Activated naive CD8-positive, alpha-beta T cell treated with anti-CD3 and anti-CD28 coated beads, Interleukin-2, amount 10 ng/mL, durations not matched to agents 7 days and 5 days (primary cell): ENCODE measurements at regions of chr9 and their contacts with region 1.

Region 1: DNA sequence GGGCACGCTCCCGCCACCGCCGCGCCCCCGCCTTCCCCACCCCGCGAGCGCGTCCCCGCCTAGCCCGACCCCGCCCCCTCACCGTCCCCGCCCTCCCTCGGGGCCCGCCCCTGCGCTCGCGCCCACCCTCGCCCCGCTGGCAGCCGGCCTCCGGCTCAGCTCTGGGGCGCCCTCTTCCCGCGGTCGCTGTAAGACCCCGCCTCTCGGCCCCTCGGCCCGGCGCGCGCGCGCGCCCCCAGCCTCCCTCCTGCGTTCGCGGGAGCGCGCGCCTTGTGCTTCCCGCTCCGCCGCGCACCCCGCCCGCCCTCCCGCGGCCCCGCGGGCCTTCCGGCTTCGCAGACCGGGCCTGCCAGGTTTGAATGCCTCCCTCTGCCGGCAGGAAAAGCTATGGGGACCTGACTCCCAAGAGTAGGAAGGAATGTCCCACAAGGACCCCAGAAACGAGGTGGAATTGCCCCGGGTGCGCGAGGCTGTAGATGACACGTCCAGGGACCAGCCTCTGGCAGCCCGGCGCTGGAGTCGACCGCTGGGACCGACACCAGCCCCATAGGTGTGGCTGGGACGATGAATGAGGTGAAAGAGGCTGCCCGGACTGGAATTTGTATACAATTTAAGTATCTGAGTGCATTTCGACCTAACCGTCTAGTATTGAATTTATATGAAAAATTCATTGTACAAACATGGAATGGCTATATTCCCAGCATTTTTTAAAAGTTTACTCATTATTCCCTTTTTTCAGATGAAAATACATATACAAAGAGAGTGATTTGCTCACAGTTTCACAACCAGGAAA is 416 bp upstream of the PTBP3 start:
- DNase-seq: peak; percentile 93
- ATAC-seq: peak; percentile 84
- H3K4me3 Mint-ChIP-seq: peak overlapping the region; percentile 92
- H3K27ac Mint-ChIP-seq: peak overlapping the region; percentile 83
- H3K4me1 Mint-ChIP-seq: peaks cover 25% of the 10 kb centered on the region
- H3K27me3 Mint-ChIP-seq: peaks cover 1% of the 10 kb centered on the region

Region 2: DNA sequence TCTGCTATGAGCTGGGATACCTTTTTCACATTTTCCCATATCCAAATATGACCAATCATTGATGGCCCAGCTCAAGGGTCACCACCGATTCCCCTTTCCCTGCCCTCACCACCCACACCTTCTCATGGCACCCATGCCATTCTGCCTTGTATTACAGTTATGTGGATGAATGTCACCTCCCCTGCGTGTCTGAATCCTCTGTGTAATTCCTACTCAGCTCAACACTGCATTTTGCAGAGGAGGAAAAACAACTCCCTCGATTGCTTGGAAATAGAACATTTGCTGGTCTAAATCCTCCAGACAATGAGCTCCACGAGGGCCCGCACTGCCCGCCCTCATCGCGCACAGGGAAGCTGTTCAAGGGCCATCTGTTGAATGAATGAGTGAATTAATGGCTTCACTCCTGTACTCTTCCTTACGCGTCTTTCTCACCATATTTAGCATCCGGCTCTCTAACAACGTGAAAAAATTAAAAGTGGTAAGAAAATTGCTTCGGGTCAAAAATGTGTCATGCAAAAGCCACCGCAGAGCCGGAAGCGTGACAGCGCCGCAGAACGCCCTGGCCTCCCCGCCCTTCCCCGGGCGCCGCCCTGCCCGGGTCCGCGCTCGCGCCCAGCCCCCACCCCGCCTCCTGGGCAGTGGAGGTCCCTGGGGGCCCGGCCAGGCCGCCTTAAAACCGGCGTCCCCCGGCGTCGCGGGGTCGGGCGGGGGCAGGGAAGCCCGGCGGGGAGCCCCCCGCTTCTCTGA is 159.4 kb before region 1 on chr9:
- POLR2A ChIA-PET with region 1: interaction called, 10 read pairs
- DNase-seq: peak; percentile 86
- ATAC-seq: peak; percentile 79
- H3K4me3 Mint-ChIP-seq: peak overlapping the region; percentile 89
- H3K27ac Mint-ChIP-seq: peak overlapping the region; percentile 88
- H3K4me1 Mint-ChIP-seq: peaks cover 56% of the 10 kb centered on the region
- H3K27me3 Mint-ChIP-seq: peaks cover 17% of the 10 kb centered on the region

Region 3: DNA sequence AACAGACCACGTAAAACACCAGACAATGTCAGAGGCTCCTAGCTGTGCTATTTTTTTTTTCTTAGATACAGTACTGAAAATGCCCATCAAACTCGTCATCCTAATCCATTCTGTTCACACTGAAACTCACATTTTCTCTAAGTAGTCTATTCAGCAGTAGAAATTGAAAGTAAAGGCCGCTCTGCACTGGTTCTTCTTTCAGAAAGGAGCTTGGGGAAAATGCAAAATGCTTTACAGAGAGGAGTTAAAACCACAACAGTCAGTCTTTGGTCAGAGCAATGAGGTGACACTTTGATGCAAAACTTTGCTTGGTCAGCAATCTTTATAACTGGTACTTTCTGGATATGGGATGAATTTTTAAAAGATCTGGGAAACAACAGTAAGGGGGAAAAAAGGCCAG is 114.9 kb before region 1 on chr9:
- POLR2A ChIA-PET with region 1: interaction called, 10 read pairs
- DNase-seq: no peak
- ATAC-seq: peak; percentile 92
- H3K4me3 Mint-ChIP-seq: peak overlapping the region; percentile 59
- H3K27ac Mint-ChIP-seq: peak overlapping the region; percentile 60
- H3K4me1 Mint-ChIP-seq: peaks cover 19% of the 10 kb centered on the region
- H3K27me3 Mint-ChIP-seq: no peaks in the 10 kb centered on the region

Region 4: DNA sequence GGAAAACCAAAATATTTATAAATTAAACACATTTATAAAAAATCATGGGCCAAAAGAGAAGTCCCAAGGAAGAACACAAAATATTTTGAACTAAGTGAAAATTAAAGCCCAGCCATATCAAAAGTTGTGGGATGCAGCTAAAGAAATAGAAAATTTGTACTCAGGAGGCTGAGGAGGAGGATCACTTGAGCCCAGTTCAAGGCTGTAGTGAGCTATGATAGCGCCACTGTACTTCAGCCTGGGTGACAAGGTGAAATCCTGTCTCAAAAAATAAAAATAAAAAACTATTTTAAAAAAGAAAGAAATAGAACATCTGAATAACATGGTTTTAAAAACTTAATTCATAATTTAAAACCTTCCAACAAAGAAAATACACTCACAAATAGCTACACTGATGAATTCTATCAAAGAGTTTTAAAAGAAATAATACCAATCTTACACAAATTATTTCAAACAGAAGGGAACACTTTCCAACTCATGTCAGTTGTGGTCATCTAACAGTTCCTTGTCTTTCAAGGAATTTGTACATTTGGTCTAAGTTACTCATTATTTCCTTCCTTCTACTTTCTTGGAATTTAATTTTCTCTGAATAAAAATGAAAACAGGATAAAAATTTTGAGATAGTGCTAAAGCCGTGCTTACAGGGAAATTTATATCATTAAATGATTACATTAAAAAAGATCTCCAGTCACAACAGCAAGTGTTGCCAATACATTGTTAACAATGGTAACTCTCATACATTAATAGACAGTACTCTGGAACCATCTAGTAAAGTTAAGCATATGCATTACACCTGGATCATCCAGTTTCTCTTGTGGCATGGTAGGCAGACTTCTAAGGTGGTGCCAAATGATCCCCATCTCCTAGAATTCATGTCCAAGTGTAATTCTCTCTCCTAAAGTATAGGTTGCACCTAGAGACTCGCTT is 18.2 kb before region 1 on chr9:
- POLR2A ChIA-PET with region 1: interaction called, 16 read pairs
- DNase-seq: no peak
- ATAC-seq: peak; percentile 28
- H3K4me3 Mint-ChIP-seq: peak overlapping the region; percentile 39
- H3K27ac Mint-ChIP-seq: peak overlapping the region; percentile 93
- H3K4me1 Mint-ChIP-seq: peaks cover 55% of the 10 kb centered on the region
- H3K27me3 Mint-ChIP-seq: no peaks in the 10 kb centered on the region

Region 5: GRCh38 chr9:112379177-112380101 is 45.6 kb after region 1 on chr9:
- POLR2A ChIA-PET with region 1: interaction called, 25 read pairs
- DNase-seq: peak; percentile 98
- ATAC-seq: peak; percentile 97
- H3K4me3 Mint-ChIP-seq: peak overlapping the region; percentile 99
- H3K27ac Mint-ChIP-seq: peak overlapping the region; percentile 98
- H3K4me1 Mint-ChIP-seq: peaks cover 44% of the 10 kb centered on the region
- H3K27me3 Mint-ChIP-seq: no peaks in the 10 kb centered on the region

Region 6: GRCh38 chr9:112396416-112396815 is 62.6 kb after region 1 on chr9:
- POLR2A ChIA-PET with region 1: no interaction called
- DNase-seq: no peak
- ATAC-seq: no peak
- H3K4me3 Mint-ChIP-seq: no peak overlapping the region
- H3K27ac Mint-ChIP-seq: no peak overlapping the region
- H3K4me1 Mint-ChIP-seq: peaks cover 3% of the 10 kb centered on the region
- H3K27me3 Mint-ChIP-seq: no peaks in the 10 kb centered on the region

Region 7: DNA sequence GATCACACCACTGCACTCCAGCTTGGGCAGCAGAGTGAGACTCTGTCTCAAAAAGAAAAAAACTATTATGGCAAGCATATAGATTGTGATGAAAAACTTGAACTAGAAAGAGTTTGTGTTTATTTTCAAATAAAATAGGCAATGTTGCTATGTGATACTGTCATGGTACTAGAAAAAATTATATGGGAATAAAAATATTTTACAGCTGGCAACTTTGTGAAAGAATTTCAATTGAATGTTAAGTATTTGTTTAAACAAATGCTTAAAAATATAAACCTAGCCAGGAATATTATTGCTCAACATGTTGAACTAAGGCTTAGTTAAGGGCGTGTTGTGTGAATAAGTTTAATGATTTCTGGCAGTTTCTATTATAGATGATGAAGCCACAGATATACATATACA is 77.8 kb after region 1 on chr9:
- POLR2A ChIA-PET with region 1: no interaction called
- DNase-seq: no peak
- ATAC-seq: no peak
- H3K4me3 Mint-ChIP-seq: no peak overlapping the region
- H3K27ac Mint-ChIP-seq: no peak overlapping the region
- H3K4me1 Mint-ChIP-seq: no peaks in the 10 kb centered on the region
- H3K27me3 Mint-ChIP-seq: no peaks in the 10 kb centered on the region